Activated T-helper 2 cell treated with anti-CD3 and anti-CD28 coated beads, Interferon-gamma antibody, Interleukin-2, Interleukin-4, amounts not matched to agents 10 μg/mL and 5 μg/mL and 100 μg/mL, durations not matched to agents 14 hours and 24 hours and 36 hours (primary cell): ENCODE measurements at regions of chr18 and their contacts with region 1.

Region 1: DNA sequence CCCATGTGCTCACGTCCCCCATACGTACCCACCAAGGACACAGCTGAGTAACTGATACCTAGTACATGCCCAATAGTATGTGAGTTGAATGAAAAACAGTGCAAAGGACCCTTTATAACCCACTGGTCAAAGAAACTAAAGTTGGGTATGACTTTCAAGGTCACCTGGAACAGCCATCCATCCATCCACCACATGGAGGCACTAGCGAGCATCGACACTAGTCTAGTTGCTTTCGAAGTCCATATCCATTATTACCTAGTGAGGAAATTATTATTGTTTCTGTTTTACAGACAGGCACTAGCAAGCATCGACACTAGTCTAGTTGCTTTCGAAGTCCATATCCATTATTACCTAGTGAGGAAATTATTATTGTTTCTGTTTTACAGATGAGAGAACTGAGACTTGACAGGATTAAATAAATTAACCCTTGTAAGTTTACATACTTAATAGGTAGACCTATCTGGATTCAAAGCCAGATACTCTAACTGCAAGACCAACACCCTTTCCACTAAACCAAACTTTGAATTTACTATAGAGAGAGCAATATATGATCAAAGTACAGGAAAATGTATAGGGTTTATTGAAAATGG is 233.7 kb downstream of the METTL4 start:
- DNase-seq: peak; percentile 11
- H3K4me3 Mint-ChIP-seq: no peak overlapping the region
- H3K27ac Mint-ChIP-seq: no peak overlapping the region
- H3K4me1 Mint-ChIP-seq: peaks cover 5% of the 10 kb centered on the region
- H3K27me3 Mint-ChIP-seq: peaks cover 12% of the 10 kb centered on the region

Region 2: DNA sequence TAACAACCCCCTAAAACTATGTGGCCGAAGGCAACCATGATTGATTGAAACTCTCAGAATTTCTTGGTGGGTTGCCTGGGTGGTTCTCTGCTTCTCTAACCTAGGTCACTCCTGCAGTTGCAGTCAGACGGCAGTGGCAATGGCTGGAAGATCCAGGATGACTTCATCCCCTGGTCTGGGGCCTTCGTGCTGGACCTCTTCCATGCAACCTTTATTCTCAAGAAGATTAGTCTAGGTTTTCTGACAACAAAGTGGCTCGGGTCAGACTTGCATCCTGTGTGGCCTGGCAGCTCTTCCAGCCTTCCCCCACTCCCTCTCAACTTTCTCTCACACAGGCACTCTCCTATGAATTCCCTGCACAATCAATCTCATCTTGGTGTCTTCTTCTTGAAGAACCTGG is 157.3 kb after region 1 on chr18:
- intact Hi-C with region 1: no loop called
- DNase-seq: no peak
- H3K4me3 Mint-ChIP-seq: no peak overlapping the region
- H3K27ac Mint-ChIP-seq: no peak overlapping the region
- H3K4me1 Mint-ChIP-seq: no peaks in the 10 kb centered on the region
- H3K27me3 Mint-ChIP-seq: no peaks in the 10 kb centered on the region

Region 3: GRCh38 chr18:2547477-2548087 is 209.9 kb after region 1 on chr18:
- intact Hi-C with region 1: loop called (anchors 1 kb)
- DNase-seq: no peak
- H3K4me3 Mint-ChIP-seq: no peak overlapping the region
- H3K27ac Mint-ChIP-seq: no peak overlapping the region
- H3K4me1 Mint-ChIP-seq: no peaks in the 10 kb centered on the region
- H3K27me3 Mint-ChIP-seq: no peaks in the 10 kb centered on the region